ENCODE measurements at regions of chr6 and their contacts with region 1.

Region 1: GRCh38 chr6:1230689-1231605 is 81.0 kb upstream of the FOXQ1 start:
- DNase-seq: no peak
- H3K4me3 ChIP-seq: no peak overlapping the region
- H3K27ac ChIP-seq: no peak overlapping the region
- H3K4me1 ChIP-seq: peaks cover 0 to 19% (median 11%) of the 10 kb centered on the region in 4 donors
- H3K27me3 ChIP-seq: no peaks in the 10 kb centered on the region
- CTCF ChIP-seq: no peak
- EP300 ChIP-seq: no peak
- POLR2A ChIP-seq: no peak

Region 2: DNA sequence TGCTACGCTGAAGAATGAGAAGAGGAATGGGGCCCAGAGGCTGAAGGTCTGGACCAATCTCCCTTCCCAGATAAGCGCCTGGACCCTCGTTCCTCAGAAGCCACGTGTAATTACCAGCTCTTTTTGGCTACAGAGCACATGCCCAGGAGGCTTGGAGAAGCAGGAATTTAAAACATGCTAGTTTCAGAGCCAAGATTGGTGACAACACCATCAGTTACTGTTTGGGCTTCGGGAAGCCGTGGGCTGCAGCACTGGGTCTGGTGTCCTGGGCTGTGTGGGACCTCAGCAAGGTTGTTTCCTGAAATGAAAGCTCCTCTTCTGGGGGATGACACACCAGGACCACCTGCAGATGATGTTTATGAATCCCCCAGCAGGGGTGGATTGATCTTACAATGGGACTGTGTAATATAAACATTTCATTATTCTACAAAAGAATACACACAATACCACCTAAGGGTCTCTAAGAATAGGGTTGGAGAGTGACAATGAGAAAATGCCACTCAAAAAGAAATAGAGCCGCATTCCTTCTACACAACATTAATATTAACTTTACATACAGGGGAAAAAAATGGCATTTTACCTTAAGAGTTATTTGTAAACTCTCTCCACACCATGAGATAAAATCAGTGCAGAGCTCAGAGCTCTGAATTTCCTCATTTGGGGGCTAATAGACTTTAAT is 126.9 kb before region 1 on chr6:
- intact Hi-C with region 1: loop called (anchors 10 kb)
- DNase-seq: no peak
- H3K4me3 ChIP-seq: no peak overlapping the region
- H3K27ac ChIP-seq: no peak overlapping the region
- H3K4me1 ChIP-seq: peaks cover 0 to 11% (median 0%) of the 10 kb centered on the region in 4 donors
- H3K27me3 ChIP-seq: no peaks in the 10 kb centered on the region
- CTCF ChIP-seq: no peak
- EP300 ChIP-seq: no peak
- POLR2A ChIP-seq: no peak

Region 3: GRCh38 chr6:1515280-1515679 is 284.3 kb after region 1 on chr6:
- intact Hi-C with region 1: no loop called
- DNase-seq: no peak
- H3K4me3 ChIP-seq: no peak overlapping the region
- H3K27ac ChIP-seq: no peak overlapping the region
- H3K4me1 ChIP-seq: no peaks in the 10 kb centered on the region
- H3K27me3 ChIP-seq: peaks cover 0 to 11% (median 0%) of the 10 kb centered on the region in 3 donors
- CTCF ChIP-seq: no peak
- EP300 ChIP-seq: no peak
- POLR2A ChIP-seq: no peak